B cell (primary cell): ENCODE measurements at regions of chr5 and their contacts with region 1.

Region 1: GRCh38 chr5:39074016-39074886 is at the start of gene RICTOR:
- DNase-seq: peak; percentile 92
- ATAC-seq: peak; percentile 79
- H3K4me3 ChIP-seq: peak within 1 kb of the TSS; percentile 75 to 95 (median 82)
- H3K4me3 Mint-ChIP-seq: peak within 1 kb of the TSS; percentile 99
- H3K27ac ChIP-seq: peak within 1 kb of the TSS; percentile 88 to 96
- H3K27ac Mint-ChIP-seq: peak within 1 kb of the TSS; percentile 99
- H3K4me1 ChIP-seq: peaks cover 22 to 39% of the 10 kb centered on the region in 2 donors
- H3K4me1 Mint-ChIP-seq: peaks cover 53% of the 10 kb centered on the region
- H3K27me3 ChIP-seq: no peaks in the 10 kb centered on the region
- H3K27me3 Mint-ChIP-seq: no peaks in the 10 kb centered on the region
- CTCF ChIP-seq: no peak
- total RNA-seq, gene RICTOR: 82.8 and 84.3 TPM in 2 replicates

Region 2: GRCh38 chr5:37370864-37371726 is 1703.2 kb before region 1 on chr5 and contains the start of gene NUP155:
- CTCF ChIA-PET with region 1: no interaction called
- POLR2A ChIA-PET with region 1: no interaction called
- intact Hi-C with region 1: loop called (anchors 10 kb)
- DNase-seq: peak; percentile 93
- ATAC-seq: peak; percentile 94
- H3K4me3 ChIP-seq: peak within 1 kb of the TSS; percentile 71 to 95 (median 94)
- H3K4me3 Mint-ChIP-seq: peak within 1 kb of the TSS; percentile 96
- H3K27ac ChIP-seq: peak within 1 kb of the TSS; percentile 83 to 92
- H3K27ac Mint-ChIP-seq: peak within 1 kb of the TSS; percentile 94
- H3K4me1 ChIP-seq: peaks cover 24% of the 10 kb centered on the region in 2 donors
- H3K4me1 Mint-ChIP-seq: peaks cover 30% of the 10 kb centered on the region
- H3K27me3 ChIP-seq: no peaks in the 10 kb centered on the region
- H3K27me3 Mint-ChIP-seq: no peaks in the 10 kb centered on the region
- CTCF ChIP-seq: no peak
- total RNA-seq, gene NUP155: 33.8 and 34.1 TPM in 2 replicates

Region 3: DNA sequence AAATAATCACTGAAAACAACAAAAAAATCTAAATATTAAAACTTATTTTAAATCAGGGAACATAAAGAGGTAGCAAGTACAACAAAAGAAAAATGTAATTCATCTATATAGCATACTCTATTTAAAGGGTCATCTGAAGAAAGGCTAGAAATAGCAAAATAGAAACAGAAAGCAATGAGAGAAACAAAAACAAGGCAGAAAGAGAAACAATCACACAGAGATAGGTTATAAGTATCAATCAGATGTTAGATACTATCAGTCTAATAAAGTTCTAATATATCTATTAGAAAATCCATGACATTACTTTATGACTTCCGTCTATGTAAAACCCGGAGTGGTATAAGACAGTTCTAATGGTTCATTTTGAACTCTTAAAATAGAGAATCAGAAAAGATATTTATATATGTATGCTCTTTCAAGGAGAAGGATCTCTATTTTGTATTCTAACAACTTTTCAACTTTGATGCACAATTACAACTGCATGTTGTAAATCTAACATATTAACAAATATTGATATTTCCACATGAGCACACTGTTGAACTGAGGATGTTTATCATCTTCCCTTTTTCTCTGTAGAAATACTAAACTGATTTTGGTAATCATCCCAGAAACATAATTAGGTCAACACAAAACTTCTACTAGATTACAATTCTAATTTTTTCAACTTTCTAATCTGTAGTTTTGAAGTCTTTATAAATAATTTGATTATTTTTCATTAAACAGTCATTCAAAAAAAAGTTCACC is 15.9 kb before region 1 on chr5:
- CTCF ChIA-PET with region 1: interaction called, 4 read pairs
- POLR2A ChIA-PET with region 1: no interaction called
- intact Hi-C with region 1: loop called (anchors 2 kb)
- DNase-seq: no peak
- ATAC-seq: no peak
- H3K4me3 ChIP-seq: peak overlapping the region in 3 of 5 experiments; percentile 19 to 54 (median 28)
- H3K4me3 Mint-ChIP-seq: peak overlapping the region; percentile 55
- H3K27ac ChIP-seq: peak overlapping the region in 1 of 2 donors; percentile 68
- H3K27ac Mint-ChIP-seq: no peak overlapping the region
- H3K4me1 ChIP-seq: peaks cover 0 to 20% of the 10 kb centered on the region in 2 donors
- H3K4me1 Mint-ChIP-seq: peaks cover 51% of the 10 kb centered on the region
- H3K27me3 ChIP-seq: no peaks in the 10 kb centered on the region
- H3K27me3 Mint-ChIP-seq: no peaks in the 10 kb centered on the region
- CTCF ChIP-seq: no peak

Region 4: DNA sequence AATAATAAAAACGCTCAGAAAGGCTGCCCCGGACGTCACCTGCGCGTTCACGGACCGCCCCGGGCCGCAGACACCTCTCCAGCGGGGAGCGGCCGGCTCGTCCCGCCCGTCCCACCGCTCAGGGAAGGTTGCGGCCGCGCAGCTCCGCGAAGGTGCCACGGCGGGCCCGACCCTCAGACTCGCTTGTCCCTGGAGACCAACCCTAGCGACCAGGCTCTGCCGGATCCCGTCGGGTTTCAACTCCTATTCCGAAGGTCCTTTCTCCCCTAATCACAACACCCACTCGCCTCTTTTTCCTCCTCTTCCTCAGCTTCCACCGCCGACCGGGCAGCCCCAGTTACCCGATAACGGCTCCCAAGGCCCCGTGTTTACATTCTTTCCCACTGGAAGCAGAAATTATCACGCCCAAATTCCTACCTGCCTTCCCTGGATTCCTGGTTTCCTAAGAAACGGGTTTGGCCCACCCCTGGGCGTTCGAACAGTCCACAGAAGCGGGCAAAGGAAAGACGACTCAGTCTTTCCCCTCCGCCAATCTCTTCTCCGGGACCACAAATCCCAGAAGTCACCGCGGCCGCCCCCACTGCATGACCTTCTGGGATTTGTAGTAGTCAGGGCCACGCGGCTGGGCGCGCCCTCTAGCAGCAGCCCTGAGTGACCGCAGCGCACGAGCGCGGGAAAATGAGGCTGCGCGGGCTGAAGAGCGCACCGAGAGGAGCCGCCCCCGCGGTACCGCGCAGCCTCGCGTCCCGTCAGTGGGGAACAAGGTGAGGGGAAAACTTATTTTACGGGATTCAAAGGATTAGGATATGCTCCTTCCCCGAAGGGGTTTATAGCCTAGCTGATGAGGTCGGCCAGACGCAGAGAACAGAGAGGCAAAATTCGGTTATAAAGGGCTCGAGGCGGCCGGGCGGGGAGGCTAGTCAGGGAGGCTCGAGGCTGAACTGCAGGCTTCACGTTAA is 1681.4 kb after region 1 on chr5 and contains the start of gene TTC33:
- CTCF ChIA-PET with region 1: no interaction called
- POLR2A ChIA-PET with region 1: no interaction called
- intact Hi-C with region 1: loop called (anchors 1 kb)
- DNase-seq: peak; percentile 92
- ATAC-seq: peak; percentile 94
- H3K4me3 ChIP-seq: peak within 1 kb of the TSS; percentile 78 to 100 (median 95)
- H3K4me3 Mint-ChIP-seq: no peak within 1 kb of the TSS
- H3K27ac ChIP-seq: peak within 1 kb of the TSS; percentile 77 to 92
- H3K27ac Mint-ChIP-seq: no peak within 1 kb of the TSS
- H3K4me1 ChIP-seq: peaks cover 10 to 13% of the 10 kb centered on the region in 2 donors
- H3K4me1 Mint-ChIP-seq: peaks cover 16% of the 10 kb centered on the region
- H3K27me3 ChIP-seq: no peaks in the 10 kb centered on the region
- H3K27me3 Mint-ChIP-seq: no peaks in the 10 kb centered on the region
- CTCF ChIP-seq: peak; percentile 63
- total RNA-seq, gene TTC33: 15.8 and 18.2 TPM in 2 replicates

Region 5: DNA sequence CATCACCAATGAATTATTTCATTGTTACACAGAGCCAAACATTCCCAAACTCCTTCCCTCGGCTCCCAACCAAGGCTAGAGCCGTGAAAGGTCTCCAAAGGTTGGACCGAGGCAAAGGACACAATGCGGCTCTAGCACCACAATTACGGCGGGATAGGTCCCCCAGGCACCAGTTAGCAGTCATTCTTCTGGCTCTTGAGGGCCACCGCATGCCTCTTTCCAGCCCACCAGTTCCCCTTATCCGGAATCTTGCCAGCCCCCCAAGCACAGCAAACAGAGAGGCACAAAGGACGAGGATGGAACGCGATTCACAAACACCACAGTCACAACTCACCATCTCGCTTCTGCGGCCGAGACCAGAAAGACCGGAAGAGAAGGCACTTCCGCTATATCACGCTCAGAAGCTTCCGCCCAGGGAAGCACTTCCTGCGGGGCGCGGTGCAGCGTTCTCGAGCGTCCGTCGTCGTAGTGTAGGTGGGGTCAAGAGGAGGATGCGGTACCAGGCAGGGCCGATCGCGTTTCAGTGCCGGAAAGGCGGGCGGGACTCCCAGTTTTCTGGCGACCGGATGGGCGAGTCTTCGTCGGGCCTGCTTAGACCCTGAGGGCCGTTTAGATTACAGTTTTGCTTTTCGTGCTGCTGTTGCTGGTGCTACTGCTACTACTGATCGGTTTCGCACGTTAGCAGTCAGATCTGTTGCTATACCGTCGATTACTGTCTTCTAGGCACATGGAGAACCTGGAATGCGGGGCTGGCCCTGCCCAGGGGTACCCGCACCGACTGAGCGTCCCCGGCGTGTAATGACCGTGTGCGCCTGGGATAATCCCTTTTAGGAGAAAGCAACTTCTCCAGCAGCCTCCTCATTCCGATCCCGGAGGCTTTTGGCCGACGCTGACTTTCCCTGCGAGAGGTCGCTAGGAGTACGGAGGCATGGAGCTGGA is 1760.9 kb after region 1 on chr5 and contains the start of gene RPL37:
- CTCF ChIA-PET with region 1: no interaction called
- POLR2A ChIA-PET with region 1: no interaction called
- intact Hi-C with region 1: loop called (anchors 2 kb)
- DNase-seq: peak; percentile 95
- ATAC-seq: peak; percentile 98
- H3K4me3 ChIP-seq: peak within 1 kb of the TSS; percentile 74 to 99 (median 89)
- H3K4me3 Mint-ChIP-seq: peak within 1 kb of the TSS; percentile 99
- H3K27ac ChIP-seq: peak within 1 kb of the TSS; percentile 85 to 91
- H3K27ac Mint-ChIP-seq: peak within 1 kb of the TSS; percentile 98
- H3K4me1 ChIP-seq: peaks cover 21 to 23% of the 10 kb centered on the region in 2 donors
- H3K4me1 Mint-ChIP-seq: peaks cover 43% of the 10 kb centered on the region
- H3K27me3 ChIP-seq: no peaks in the 10 kb centered on the region
- H3K27me3 Mint-ChIP-seq: no peaks in the 10 kb centered on the region
- CTCF ChIP-seq: no peak
- total RNA-seq, gene RPL37: 1,932 and 2,240 TPM in 2 replicates